ENCODE measurements at regions of chr7 and their contacts with region 1.

Region 1: DNA sequence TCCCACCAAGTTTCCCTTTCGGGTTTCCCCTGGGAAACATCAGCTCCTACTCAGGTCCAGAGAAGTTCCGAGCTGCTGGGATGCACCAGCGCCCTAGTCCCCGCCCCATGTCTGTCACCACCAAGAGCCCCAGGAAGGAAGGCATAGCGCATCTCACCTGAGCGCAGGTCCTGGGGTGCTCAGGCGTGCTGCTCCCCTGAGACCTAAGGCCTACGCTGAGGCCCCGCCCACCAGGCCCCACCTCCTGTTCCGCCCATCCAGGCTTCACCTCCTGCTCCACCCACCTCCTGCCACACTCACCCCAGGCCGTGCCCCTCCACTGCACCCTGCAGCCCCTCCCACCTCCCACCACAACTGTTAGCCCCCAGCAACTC is 1.2 kb upstream of the TFR2 start:
- DNase-seq: no peak
- ATAC-seq: no peak

Region 2: DNA sequence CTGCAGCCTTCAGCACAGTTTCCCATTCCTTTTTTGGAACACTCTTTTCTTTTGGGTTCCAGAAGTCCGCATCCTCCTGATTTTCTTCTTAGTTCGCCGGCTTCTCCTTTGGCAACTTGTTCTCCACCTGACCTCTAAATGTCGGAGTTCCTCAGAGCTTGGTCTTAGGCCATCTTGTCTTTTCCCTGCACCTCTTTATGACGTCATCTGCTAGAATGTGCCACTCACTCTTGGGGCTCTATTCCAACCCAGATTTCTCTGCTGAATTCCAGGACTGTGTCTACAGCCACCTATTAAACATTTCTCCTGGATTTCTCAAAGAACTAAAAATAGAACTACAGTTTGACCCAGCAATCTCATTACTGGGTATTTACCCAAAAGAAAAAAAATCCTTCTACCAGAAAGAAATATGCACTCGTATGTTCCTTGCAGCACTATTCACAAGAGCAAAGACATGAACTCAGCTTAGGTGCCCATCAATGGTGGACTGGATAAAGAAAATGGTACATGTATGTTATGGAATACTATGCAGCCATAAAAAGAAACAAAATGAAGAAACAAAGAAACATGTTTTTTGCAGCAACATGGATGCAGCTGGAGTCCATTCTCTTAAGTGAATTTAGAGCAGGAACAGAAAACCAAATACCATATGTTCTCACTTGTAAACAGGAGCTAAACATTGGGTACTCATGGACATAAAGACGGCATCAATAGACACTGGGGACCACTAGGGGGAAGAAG is 25.4 kb after region 1 on chr7:
- intact Hi-C with region 1: loop called (anchors 2 kb)
- DNase-seq: no peak
- ATAC-seq: no peak